RWPE1 (cell line): ENCODE measurements at regions of chr17 and their contacts with region 1.

Region 1: DNA sequence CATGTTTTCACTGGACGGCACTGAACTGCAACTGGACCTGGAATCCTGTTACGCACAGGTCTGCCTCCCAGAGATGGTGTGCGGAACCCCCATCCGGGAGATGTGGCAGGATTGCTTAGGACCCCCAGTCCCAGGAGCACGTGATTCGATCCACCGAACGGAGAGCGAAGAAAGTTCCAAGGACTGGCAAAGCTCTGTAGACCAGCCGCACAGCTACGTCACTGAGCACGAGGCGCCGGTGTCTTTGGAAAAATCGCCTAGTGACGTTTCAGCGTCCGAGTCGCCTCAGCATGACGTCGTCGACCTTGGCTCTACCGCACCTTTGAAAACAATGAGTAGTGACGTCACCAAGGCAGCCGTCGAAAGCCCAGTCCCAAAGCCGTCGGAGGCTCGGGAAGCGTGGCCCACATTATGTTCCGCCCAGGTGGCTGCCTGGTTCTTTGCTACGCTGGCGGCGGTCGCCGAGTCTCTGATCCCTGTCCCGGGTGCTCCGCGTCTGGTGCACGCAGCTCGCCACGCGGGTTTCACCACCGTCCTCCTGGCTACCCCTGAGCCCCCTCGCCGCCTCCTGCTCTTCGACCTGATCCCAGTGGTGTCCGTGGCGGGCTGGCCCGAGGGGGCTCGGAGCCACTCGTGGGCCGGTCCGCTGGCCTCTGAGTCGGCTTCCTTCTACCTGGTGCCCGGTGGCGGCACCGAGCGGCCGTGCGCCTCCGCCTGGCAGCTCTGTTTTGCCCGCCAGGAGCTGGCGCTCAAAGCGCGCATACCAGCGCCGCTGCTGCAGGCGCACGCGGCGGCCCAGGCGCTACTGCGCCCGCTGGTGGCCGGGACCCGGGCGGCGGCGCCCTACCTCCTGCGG is 1.3 kb downstream of the TMEM102 start:
- DNase-seq: peak; percentile 72
- H3K27ac ChIP-seq: peak overlapping the region; percentile 92
- CTCF ChIP-seq: peak; percentile 97

Region 2: DNA sequence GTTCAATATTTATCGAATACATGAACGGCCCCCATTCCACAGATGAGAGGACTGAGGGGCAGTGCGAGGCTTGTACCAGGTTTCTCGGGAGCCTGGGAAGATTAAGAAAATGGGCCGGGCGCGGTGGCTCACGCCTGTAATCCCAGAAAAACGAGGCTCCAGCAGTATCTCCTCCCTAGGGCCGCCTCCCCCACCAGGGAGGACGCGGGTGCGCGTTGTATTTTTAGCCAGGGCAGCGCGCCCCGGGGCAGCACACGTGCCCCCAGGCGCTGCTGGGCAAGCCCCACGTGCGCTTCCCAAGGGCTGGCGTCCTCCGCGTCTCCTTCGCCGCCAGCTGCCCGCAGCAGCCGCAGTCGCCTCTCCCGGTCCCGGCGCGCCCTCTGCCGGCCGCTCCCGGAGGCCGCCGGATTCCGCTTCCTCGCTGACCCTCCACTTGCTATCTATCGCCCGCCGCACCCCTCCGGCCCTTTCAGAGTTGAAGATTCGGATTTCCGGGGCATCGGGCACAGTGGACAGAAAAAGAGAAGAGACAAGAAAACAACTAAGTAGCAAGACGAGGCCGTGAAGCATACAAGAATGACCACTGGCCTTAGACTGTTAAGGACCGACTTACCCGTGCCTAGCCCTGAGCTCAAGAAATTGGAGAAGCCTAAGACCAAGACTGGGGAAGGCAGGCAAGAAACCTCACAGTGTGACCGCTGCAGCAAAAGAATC is 140.2 kb before region 1 on chr17:
- CTCF ChIA-PET with region 1: no interaction called
- POLR2A ChIA-PET with region 1: no interaction called
- DNase-seq: peak; percentile 55
- H3K27ac ChIP-seq: peak overlapping the region; percentile 81
- CTCF ChIP-seq: peak; percentile 94

Region 3: DNA sequence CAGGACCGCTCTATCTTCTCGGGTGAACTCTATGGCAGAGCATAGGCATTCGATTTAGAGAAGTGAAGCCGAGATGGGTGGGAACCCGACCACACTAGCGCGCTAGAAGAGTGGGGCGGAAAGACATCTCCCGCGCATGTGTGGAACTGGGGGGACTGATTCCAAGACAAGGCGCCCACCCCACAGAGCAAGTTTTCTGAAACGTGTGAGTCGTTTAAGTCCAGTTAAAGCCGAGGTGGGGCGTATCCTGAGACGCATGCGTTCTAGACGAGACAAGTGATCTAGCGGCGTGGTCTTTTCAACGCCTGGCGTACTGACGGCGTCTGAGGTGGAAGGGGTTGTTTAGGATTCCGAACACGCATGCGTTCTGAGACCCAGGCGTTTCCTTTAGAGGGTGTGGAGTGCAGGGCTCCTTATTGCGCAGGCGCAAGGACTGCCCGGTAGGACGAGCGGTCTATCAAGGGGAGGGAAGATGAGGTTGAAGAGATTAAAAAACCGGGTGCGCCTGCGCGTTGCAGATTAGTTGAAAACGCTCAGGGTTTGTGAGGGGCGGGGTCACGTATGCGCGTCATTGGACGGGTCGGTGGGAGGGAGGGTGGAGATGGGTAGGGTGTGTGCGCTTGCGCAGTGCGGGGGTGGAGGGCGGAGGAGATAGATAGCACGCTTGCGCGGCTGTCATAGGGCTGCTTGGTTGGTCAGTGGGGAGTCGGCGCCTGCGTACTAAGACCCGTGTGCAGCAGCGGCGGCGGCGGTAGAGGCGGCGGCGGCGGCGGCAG is 129.5 kb before region 1 on chr17 and contains the start of gene EIF5A:
- CTCF ChIA-PET with region 1: no interaction called
- POLR2A ChIA-PET with region 1: no interaction called
- DNase-seq: peak; percentile 100
- H3K27ac ChIP-seq: peak within 1 kb of the TSS; percentile 98
- CTCF ChIP-seq: no peak

Region 4: DNA sequence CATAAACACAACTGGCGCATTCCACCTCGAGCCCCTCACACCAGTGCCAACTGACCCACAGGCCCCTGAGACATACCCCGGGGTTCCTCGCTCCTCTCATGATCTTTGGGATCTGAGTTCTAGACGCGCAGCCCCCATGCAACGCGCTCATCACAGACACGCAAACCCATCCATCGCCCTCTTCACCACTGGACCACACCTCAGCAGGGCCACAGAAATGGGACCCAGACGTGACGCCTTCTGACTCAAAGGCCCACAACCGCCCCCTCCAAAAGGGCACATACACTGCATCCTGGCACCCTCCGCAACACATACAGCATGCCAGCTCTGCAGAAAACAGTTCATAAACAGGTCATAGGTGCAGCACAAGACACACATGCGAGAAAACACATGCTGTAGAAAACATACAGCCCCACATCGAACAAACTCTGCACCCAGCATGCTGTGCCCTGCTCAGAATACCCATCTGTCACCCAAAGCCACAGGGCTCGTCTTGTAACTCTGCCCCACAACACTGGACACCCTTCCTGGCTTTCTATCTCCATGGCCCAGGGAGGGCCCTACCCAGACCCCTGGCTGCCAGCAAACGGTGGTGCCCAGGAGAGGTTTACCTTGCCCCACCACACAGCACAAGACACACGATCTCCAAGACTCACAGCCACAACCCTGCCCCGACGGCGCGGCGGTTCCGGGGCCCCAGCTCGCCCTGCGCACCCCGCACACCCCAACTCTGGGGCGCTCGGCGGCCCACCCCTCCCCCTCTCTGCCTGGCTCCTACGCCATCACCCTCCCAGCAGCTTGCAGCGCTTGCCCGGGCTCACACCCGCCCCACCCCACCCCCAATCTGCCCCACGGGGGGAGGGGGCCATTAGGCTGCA is 41.9 kb after region 1 on chr17:
- CTCF ChIA-PET with region 1: interaction called, 19 read pairs
- POLR2A ChIA-PET with region 1: no interaction called
- DNase-seq: peak; percentile 52
- H3K27ac ChIP-seq: peak overlapping the region; percentile 99
- CTCF ChIP-seq: no peak

Region 5: GRCh38 chr17:7484067-7484918 is 47.7 kb after region 1 on chr17 and contains the start of gene POLR2A:
- CTCF ChIA-PET with region 1: interaction called, 20 read pairs
- POLR2A ChIA-PET with region 1: interaction called, 4 read pairs
- DNase-seq: peak; percentile 99
- H3K27ac ChIP-seq: peak within 1 kb of the TSS; percentile 99
- CTCF ChIP-seq: no peak